ENCODE measurements at regions of chr17 and their contacts with region 1.

Region 1: DNA sequence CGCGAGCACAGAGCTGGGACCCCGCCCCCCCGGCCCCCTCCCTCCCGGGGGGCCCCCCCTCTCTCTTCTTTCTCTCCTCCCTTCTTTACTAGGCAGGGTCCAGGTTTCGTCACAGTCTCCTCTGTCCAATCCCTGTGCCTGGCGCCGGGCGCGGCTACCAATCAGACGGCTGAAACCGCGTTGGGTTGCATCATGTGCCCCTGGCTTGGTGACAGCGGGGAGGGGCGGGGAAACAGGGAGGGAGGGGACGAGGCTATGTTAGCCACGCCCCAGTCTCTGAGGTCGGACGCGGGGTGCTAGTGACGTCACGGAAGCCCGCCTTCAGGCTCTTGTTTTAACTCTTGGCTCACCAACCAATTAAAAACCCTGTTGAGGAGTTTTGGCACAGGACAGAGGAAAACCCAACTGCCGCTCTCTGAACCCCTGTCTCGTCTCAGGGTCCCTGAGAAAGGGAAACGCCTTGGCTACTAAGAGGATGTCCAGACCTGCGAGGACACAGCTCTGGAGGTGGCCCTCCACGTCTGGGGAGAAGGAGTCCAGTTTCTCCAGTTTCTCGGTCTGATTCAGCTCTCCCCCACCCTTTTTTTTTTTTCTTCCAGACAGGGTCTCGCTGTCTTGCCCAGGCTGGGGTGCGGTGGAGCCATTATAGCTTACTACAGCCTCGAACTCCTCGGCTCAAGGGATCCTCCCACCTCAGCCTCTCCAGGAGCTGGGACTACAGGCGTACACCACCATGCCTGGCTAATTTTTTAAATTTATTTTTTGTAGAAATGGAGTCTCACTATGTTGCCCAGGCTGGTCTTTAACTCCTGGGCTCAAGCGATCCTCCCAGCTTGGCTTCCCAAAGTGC is 439 bp upstream of the PLEKHH3 start:
- DNase-seq: peak; percentile 96

Region 2: GRCh38 chr17:42566883-42567573 is 110.2 kb before region 1 on chr17 and contains the start of gene MLX:
- CTCF ChIA-PET with region 1: no interaction called
- POLR2A ChIA-PET with region 1: interaction called, 22 read pairs
- DNase-seq: peak; percentile 99

Region 3: GRCh38 chr17:42653179-42654124 is 23.8 kb before region 1 on chr17:
- CTCF ChIA-PET with region 1: interaction called, 6 read pairs
- POLR2A ChIA-PET with region 1: interaction called, 102 read pairs
- DNase-seq: peak; percentile 52

Region 4: DNA sequence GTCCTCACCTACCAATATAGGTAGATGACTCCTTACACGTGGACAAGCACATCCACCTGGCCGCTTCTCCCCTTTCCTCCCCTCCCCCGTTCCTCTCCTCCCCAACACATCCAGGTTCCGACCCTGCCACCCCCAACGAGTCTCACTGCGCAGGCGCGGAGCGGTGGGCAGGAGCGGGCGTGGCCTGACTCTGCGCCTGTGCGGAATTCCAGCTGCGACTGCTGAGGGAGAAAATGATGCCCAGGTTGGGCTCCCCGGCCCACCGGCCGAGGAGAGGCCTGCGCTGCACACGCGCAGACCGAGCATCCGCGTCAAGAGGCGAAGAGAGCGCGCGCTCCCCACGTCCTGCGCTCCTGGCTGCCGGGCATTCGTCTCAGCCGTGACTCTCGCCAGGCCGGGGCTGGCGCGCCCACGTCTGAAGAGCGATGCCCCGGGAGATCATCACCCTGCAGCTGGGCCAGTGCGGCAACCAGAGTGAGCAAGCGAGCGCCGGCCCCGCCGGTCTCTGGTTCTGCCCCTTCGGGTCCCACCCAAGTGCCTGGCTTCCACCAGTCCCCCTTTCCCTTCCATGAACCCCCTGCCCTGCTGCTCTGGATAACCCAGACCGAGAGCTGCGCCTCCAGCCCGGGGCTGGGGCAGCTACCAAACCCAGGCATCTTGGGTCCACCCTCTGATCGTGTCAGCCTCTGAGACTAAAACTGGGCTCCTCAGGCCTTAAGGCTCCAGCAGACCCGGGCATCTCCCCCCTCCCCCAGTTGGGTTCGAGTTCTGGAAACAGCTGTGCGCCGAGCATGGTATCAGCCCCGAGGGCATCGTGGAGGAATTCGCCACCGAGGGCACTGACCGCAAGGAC is 17.9 kb before region 1 on chr17 and contains the start of gene TUBG2:
- CTCF ChIA-PET with region 1: interaction called, 9 read pairs
- POLR2A ChIA-PET with region 1: interaction called, 102 read pairs
- DNase-seq: peak; percentile 87

Region 5: GRCh38 chr17:42843358-42843934 is 166.2 kb after region 1 on chr17:
- CTCF ChIA-PET with region 1: no interaction called
- POLR2A ChIA-PET with region 1: no interaction called
- DNase-seq: peak; percentile 71

Measured in HEK293T (cell line).